PC-9 (cell line): ENCODE measurements at regions of chr4 and their contacts with region 1.

Region 1: GRCh38 chr4:56532239-56532638 is 26.6 kb downstream of the ARL9 start:
- DNase-seq: no peak
- H3K4me3 ChIP-seq: no peak overlapping the region
- H3K27ac ChIP-seq: no peak overlapping the region
- H3K4me1 ChIP-seq: 0 out of 2 replicates have a peak, but pooled peaks cover 5% of the 10 kb centered on the region
- H3K27me3 ChIP-seq: no peaks in the 10 kb centered on the region
- CTCF ChIP-seq: no peak

Region 2: GRCh38 chr4:56391277-56391676 is 141.0 kb before region 1 on chr4:
- CTCF ChIA-PET with region 1: no interaction called
- POLR2A ChIA-PET with region 1: no interaction called
- intact Hi-C with region 1: no loop called
- DNase-seq: no peak
- H3K4me3 ChIP-seq: no peak overlapping the region
- H3K27ac ChIP-seq: no peak overlapping the region
- H3K4me1 ChIP-seq: no peaks in the 10 kb centered on the region; the same call in 1 of the 2 replicates
- H3K27me3 ChIP-seq: no peaks in the 10 kb centered on the region
- CTCF ChIP-seq: no peak

Region 3: GRCh38 chr4:56511098-56511497 is 21.1 kb before region 1 on chr4:
- CTCF ChIA-PET with region 1: no interaction called
- POLR2A ChIA-PET with region 1: interaction called, 12 read pairs
- intact Hi-C with region 1: no loop called
- DNase-seq: no peak
- H3K4me3 ChIP-seq: no peak overlapping the region
- H3K27ac ChIP-seq: no peak overlapping the region
- H3K4me1 ChIP-seq: no peaks in the 10 kb centered on the region
- H3K27me3 ChIP-seq: no peaks in the 10 kb centered on the region
- CTCF ChIP-seq: no peak

Region 4: GRCh38 chr4:56874166-56874565 is 341.9 kb after region 1 on chr4:
- CTCF ChIA-PET with region 1: no interaction called
- POLR2A ChIA-PET with region 1: no interaction called
- intact Hi-C with region 1: no loop called
- DNase-seq: peak in 1 of 2 experiments; percentile 30
- H3K4me3 ChIP-seq: no peak overlapping the region
- H3K27ac ChIP-seq: no peak overlapping the region
- H3K4me1 ChIP-seq: no peaks in the 10 kb centered on the region
- H3K27me3 ChIP-seq: no peaks in the 10 kb centered on the region
- CTCF ChIP-seq: no peak

Region 5: GRCh38 chr4:57280481-57280880 is 748.2 kb after region 1 on chr4:
- CTCF ChIA-PET with region 1: no interaction called
- POLR2A ChIA-PET with region 1: no interaction called
- intact Hi-C with region 1: no loop called
- DNase-seq: no peak
- H3K4me3 ChIP-seq: no peak overlapping the region
- H3K27ac ChIP-seq: no peak overlapping the region
- H3K4me1 ChIP-seq: no peaks in the 10 kb centered on the region
- H3K27me3 ChIP-seq: no peaks in the 10 kb centered on the region
- CTCF ChIP-seq: no peak